ENCODE measurements at regions of chr1 and their contacts with region 1.

Region 1: GRCh38 chr1:23634842-23635651 is 56.6 kb upstream of the RPL11 start:
- DNase-seq: peak; percentile 47
- H3K4me3 ChIP-seq: peak overlapping the region; percentile 34
- H3K27me3 ChIP-seq: no peaks in the 10 kb centered on the region
- CTCF ChIP-seq: peak; percentile 93

Region 2: GRCh38 chr1:22889213-22889827 is 745.7 kb before region 1 on chr1:
- CTCF ChIA-PET with region 1: no interaction called
- POLR2A ChIA-PET with region 1: no interaction called
- DNase-seq: no peak
- H3K4me3 ChIP-seq: no peak overlapping the region
- H3K27me3 ChIP-seq: no peaks in the 10 kb centered on the region
- CTCF ChIP-seq: peak; percentile 83

Region 3: DNA sequence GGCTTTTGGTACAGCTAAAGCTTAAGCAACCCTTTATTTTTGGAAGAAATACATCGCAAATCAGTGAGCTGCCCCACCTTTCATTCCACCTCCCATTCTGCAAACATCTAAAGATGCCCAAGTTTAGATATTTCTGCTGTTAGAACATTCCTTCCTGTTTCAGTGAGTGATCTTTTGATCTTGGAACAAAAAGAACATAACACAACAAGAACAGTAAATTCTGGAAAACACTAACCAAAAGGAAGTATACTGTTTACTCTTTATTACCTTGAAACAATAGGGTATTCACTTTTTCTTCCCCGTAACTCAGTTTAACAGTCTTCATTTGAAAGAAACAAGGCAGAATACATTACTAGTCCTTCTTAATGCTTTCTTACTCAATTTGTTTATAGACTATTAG is 331.5 kb before region 1 on chr1:
- CTCF ChIA-PET with region 1: no interaction called
- POLR2A ChIA-PET with region 1: no interaction called
- DNase-seq: no peak
- H3K4me3 ChIP-seq: no peak overlapping the region
- H3K27me3 ChIP-seq: no peaks in the 10 kb centered on the region
- CTCF ChIP-seq: no peak

Region 4: DNA sequence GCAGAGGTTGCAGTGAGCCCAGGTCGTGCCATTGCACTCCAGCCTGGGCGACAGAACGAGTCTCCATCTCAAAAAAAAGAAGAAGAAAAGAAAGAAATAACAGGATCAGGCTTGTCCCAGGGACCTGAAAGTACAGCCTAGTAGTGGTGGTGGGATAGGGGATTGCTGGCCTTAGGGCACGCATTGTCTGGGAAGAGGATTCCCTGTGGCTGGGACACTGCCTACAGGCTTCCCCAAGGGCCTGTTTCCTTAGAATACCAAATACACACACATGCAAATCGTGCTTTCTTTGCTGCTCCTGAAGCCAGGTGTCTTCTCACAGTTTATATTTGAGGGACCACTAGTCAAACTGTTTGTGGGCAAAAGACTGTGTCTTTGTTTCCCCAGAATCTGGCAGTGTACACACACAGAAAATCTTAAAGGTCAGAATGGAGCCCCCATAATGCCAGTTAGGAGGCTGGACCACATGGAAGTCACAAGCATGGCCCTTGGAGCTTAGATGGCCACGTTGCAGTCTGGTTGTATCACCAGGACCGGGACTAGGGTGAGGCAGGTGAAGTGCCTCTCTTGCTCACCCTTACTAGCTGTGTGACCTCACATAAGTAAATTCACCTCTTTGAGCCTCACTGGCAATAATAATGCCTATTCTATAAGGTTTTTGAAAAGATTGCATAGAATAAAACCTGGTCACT is 138.4 kb before region 1 on chr1:
- CTCF ChIA-PET with region 1: interaction called, 36 read pairs
- POLR2A ChIA-PET with region 1: interaction called, 11 read pairs
- DNase-seq: no peak
- H3K4me3 ChIP-seq: no peak overlapping the region
- H3K27me3 ChIP-seq: no peaks in the 10 kb centered on the region
- CTCF ChIP-seq: no peak

Region 5: GRCh38 chr1:23564529-23565122 is 70.4 kb before region 1 on chr1:
- CTCF ChIA-PET with region 1: interaction called, 644 read pairs
- POLR2A ChIA-PET with region 1: interaction called, 5 read pairs
- DNase-seq: no peak
- H3K4me3 ChIP-seq: no peak overlapping the region
- H3K27me3 ChIP-seq: no peaks in the 10 kb centered on the region
- CTCF ChIP-seq: no peak

Region 6: GRCh38 chr1:23577056-23578004 is 57.7 kb before region 1 on chr1:
- CTCF ChIA-PET with region 1: interaction called, 10 read pairs
- POLR2A ChIA-PET with region 1: no interaction called
- DNase-seq: peak; percentile 80
- H3K4me3 ChIP-seq: no peak overlapping the region
- H3K27me3 ChIP-seq: no peaks in the 10 kb centered on the region
- CTCF ChIP-seq: no peak

Region 7: GRCh38 chr1:23598424-23598823 is 36.6 kb before region 1 on chr1:
- CTCF ChIA-PET with region 1: interaction called, 16 read pairs
- POLR2A ChIA-PET with region 1: no interaction called
- DNase-seq: no peak
- H3K4me3 ChIP-seq: no peak overlapping the region
- H3K27me3 ChIP-seq: no peaks in the 10 kb centered on the region
- CTCF ChIP-seq: no peak

Region 8: GRCh38 chr1:23619299-23620188 is 15.5 kb before region 1 on chr1:
- CTCF ChIA-PET with region 1: interaction called, 28 read pairs
- POLR2A ChIA-PET with region 1: interaction called, 4 read pairs
- DNase-seq: no peak
- H3K4me3 ChIP-seq: peak overlapping the region; percentile 16
- H3K27me3 ChIP-seq: peaks cover 15% of the 10 kb centered on the region
- CTCF ChIP-seq: no peak

Region 9: GRCh38 chr1:23664837-23665795 is 30.1 kb after region 1 on chr1:
- CTCF ChIA-PET with region 1: interaction called, 10 read pairs
- POLR2A ChIA-PET with region 1: no interaction called
- DNase-seq: no peak
- H3K4me3 ChIP-seq: no peak overlapping the region
- H3K27me3 ChIP-seq: no peaks in the 10 kb centered on the region
- CTCF ChIP-seq: peak; percentile 47

Region 10: GRCh38 chr1:23682946-23683345 is 47.9 kb after region 1 on chr1:
- CTCF ChIA-PET with region 1: no interaction called
- POLR2A ChIA-PET with region 1: no interaction called
- DNase-seq: no peak
- H3K4me3 ChIP-seq: no peak overlapping the region
- H3K27me3 ChIP-seq: peaks cover 8% of the 10 kb centered on the region
- CTCF ChIP-seq: no peak

Region 11: DNA sequence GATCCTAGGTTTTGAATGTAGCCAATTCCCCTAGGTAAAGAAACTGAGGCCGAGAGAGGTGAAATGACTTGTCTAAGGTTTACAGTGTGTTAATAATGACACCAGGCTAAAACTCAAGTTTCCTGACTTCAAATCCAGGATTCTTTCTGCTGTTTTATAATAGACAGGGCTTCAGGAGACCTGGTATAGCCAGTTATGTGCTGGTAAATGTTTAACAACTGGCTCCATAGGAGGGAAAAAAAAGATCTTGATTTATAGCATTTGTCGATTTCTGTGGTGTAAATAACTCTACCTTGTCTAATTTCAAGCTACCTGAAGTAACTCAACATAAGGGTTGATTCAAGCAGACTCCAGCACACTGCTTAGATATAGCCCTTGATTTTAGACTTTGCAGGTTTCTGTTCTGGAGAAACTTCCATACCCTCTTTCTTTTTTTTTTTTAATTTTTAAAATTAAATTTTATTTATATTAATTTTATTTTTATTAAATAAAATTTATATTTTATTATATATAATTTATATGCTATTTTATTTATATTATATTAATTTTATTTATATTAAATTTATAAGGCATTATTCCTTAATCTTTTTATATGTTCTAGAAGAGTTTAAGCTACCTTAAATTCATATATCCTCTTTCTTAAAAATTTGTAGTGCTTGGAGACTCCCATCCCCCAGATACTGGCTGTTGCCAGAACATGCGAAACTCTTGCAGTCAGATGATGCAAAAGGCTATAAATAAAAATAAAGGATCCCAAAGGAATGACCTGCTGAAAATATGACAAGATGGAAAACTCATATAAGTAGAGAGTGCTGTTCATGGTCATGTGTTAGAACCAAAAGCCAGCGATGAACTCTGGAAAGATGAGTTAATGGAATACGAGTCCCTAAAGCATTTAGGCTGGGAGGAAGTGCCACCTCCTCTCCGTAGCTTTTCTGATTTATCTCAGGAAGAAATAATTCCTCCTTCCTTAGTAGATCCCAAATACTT is 380.5 kb after region 1 on chr1:
- CTCF ChIA-PET with region 1: no interaction called
- POLR2A ChIA-PET with region 1: no interaction called
- DNase-seq: peak; percentile 60
- H3K4me3 ChIP-seq: no peak overlapping the region
- H3K27me3 ChIP-seq: no peaks in the 10 kb centered on the region
- CTCF ChIP-seq: no peak

Measured in BJ (cell line).